Lower lobe of right lung (tissue), 2 donors: ENCODE measurements at regions of chr3 and their contacts with region 1.

Region 1: GRCh38 chr3:128969993-128970739 is 23.7 kb downstream of the CFAP92 start:
- DNase-seq: peak; percentile 55
- ATAC-seq: peak; percentile 72 to 75
- H3K4me3 ChIP-seq: no peak overlapping the region
- H3K27ac ChIP-seq: no peak overlapping the region
- H3K4me1 ChIP-seq: peaks cover 18% of the 10 kb centered on the region
- H3K27me3 ChIP-seq: no peaks in the 10 kb centered on the region
- CTCF ChIP-seq: peak; percentile 91

Region 2: GRCh38 chr3:129039271-129040038 is 69.3 kb after region 1 on chr3:
- intact Hi-C with region 1: loop called (anchors 10 kb)
- DNase-seq: no peak
- ATAC-seq: peak; percentile 11 to 23
- H3K4me3 ChIP-seq: no peak overlapping the region
- H3K27ac ChIP-seq: no peak overlapping the region
- H3K4me1 ChIP-seq: no peaks in the 10 kb centered on the region
- H3K27me3 ChIP-seq: no peaks in the 10 kb centered on the region
- CTCF ChIP-seq: no peak

Region 3: DNA sequence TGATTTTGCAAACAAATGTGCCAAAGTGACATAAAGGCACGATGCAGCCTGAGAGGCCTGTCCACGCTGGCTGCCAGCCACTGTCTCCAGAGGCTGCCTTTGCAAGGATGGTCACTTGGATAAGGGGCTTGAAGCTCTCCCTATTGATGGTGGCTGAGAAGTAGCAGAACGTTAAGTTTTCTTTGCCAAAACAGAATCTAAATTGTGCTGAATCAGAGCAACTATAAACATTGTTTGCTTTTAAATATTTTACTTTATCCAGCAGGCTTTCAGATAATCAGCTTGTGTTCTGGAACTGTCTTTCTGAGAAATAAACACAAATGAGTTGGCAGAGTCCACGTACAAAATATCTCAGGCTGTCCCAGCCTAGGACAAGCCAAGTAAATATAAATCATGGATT is 237.3 kb after region 1 on chr3:
- intact Hi-C with region 1: no loop called
- DNase-seq: no peak
- ATAC-seq: no peak
- H3K4me3 ChIP-seq: no peak overlapping the region
- H3K27ac ChIP-seq: no peak overlapping the region
- H3K4me1 ChIP-seq: peaks cover 14% of the 10 kb centered on the region
- H3K27me3 ChIP-seq: no peaks in the 10 kb centered on the region
- CTCF ChIP-seq: no peak